ENCODE measurements at regions of chr14 and their contacts with region 1.

Region 1: GRCh38 chr14:65550779-65551643 is 138.5 kb downstream of the FUT8 start:
- DNase-seq: no peak
- ATAC-seq: no peak
- H3K4me3 ChIP-seq: no peak overlapping the region
- H3K27ac ChIP-seq: no peak overlapping the region
- H3K4me1 ChIP-seq: peaks cover 8% of the 10 kb centered on the region
- H3K27me3 ChIP-seq: no peaks in the 10 kb centered on the region
- CTCF ChIP-seq: no peak

Region 2: DNA sequence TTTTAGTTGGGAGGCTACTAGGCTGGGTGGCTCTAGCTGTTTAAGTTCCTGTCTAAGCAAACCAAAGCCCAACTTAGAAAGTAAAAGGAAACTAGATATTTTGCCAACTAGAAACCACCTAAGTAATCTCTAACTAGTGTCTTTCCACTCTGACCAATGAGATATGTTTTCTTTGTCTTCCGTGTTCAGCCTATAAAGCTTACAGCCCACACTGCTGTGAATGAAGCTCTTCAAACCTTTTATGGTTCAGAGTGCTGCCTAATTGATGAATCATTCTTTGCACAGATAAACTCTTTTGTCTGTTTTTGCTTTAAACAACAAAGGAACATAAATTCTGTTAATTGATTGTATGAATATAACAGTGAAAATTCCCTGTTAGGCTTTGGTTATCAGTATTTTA is 72.4 kb before region 1 on chr14:
- CTCF ChIA-PET with region 1: no interaction called
- POLR2A ChIA-PET with region 1: no interaction called
- intact Hi-C with region 1: no loop called
- DNase-seq: peak; percentile 38
- ATAC-seq: peak; percentile 86
- H3K4me3 ChIP-seq: no peak overlapping the region
- H3K27ac ChIP-seq: no peak overlapping the region
- H3K4me1 ChIP-seq: peaks cover 23% of the 10 kb centered on the region; the same call in 1 of the 2 replicates
- H3K27me3 ChIP-seq: no peaks in the 10 kb centered on the region
- CTCF ChIP-seq: no peak

Region 3: DNA sequence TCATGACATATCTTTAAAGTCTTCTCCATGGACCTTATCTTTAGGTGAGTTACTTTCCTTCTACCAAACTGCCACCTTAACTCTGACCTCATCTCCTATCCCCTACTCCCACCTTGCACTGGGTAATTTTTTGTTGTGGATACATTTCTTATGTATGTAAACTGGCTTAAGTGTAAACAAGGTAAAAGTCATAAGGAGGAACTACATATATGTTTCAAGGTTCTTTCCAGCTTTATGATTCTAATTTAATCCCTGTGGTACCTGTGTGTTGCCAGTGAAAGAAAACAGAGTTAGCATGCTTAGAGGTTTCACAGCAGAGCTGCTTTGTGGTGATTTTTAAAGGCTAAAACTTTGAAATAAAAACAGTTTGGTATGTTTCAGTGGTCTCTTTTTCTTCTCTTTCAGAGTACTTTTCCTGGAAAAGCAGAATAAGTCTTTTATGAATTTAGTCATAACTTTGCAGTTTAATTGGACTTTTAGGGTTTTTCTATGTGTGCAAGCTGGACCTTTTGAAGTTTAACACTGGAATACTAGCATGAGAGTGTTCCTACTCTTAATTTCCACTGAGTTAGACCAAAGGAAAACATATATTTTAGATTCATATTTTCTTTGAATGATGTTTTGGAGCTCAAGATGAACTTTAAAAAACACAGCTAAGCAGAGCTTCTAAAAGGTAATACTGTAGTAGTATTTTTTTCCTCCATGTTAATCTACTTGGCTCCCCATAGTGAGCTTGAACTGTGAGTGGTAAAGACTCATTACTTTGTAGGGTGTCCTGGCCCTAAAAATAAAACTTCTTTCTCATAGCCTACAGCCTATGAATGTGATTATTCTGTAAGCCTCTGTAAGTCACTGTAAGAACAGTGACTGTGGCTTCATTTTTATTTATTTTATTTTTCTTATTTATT is 33.1 kb before region 1 on chr14:
- CTCF ChIA-PET with region 1: no interaction called
- POLR2A ChIA-PET with region 1: no interaction called
- intact Hi-C with region 1: loop called (anchors 5 kb)
- DNase-seq: no peak
- ATAC-seq: no peak
- H3K4me3 ChIP-seq: no peak overlapping the region
- H3K27ac ChIP-seq: no peak overlapping the region
- H3K4me1 ChIP-seq: no peaks in the 10 kb centered on the region
- H3K27me3 ChIP-seq: no peaks in the 10 kb centered on the region
- CTCF ChIP-seq: no peak

Region 4: GRCh38 chr14:65594153-65594881 is 43.3 kb after region 1 on chr14:
- CTCF ChIA-PET with region 1: no interaction called
- POLR2A ChIA-PET with region 1: no interaction called
- intact Hi-C with region 1: loop called (anchors 5 kb)
- DNase-seq: peak; percentile 76
- ATAC-seq: peak; percentile 95
- H3K4me3 ChIP-seq: peak overlapping the region; percentile 7; the same call in 1 of the 2 replicates
- H3K27ac ChIP-seq: peak overlapping the region; percentile 37
- H3K4me1 ChIP-seq: peaks cover 22% of the 10 kb centered on the region
- H3K27me3 ChIP-seq: no peaks in the 10 kb centered on the region
- CTCF ChIP-seq: no peak

Region 5: GRCh38 chr14:65604936-65605335 is 53.9 kb after region 1 on chr14:
- CTCF ChIA-PET with region 1: no interaction called
- POLR2A ChIA-PET with region 1: no interaction called
- intact Hi-C with region 1: no loop called
- DNase-seq: peak; percentile 35
- ATAC-seq: peak; percentile 74
- H3K4me3 ChIP-seq: no peak overlapping the region
- H3K27ac ChIP-seq: no peak overlapping the region
- H3K4me1 ChIP-seq: peaks cover 4% of the 10 kb centered on the region; the same call in 1 of the 2 replicates
- H3K27me3 ChIP-seq: no peaks in the 10 kb centered on the region
- CTCF ChIP-seq: peak; percentile 76

Region 6: DNA sequence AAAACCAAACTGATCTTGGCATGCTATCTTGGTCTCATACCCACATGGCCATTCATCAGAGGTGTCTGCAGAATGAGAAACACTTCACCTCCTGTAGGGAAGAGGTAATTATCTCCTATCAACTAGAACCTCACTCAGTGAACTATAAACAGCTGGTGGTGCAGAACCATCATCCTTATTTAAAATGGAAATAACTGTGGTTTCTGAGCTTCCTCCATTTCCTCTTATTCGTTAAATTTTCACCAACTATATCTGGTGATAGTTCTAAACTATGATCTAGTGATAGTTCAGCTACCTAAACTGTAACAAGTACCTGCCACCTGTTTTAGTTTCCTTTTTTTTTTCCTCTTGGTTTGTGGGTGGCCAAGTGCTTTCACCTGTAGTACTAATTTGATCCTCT is 80.0 kb after region 1 on chr14:
- CTCF ChIA-PET with region 1: no interaction called
- POLR2A ChIA-PET with region 1: no interaction called
- intact Hi-C with region 1: no loop called
- DNase-seq: no peak
- ATAC-seq: no peak
- H3K4me3 ChIP-seq: no peak overlapping the region
- H3K27ac ChIP-seq: no peak overlapping the region
- H3K4me1 ChIP-seq: no peaks in the 10 kb centered on the region
- H3K27me3 ChIP-seq: no peaks in the 10 kb centered on the region
- CTCF ChIP-seq: no peak

Measured in PC-3 (cell line).